ENCODE measurements at regions of chr18 and their contacts with region 1.

Region 1: GRCh38 chr18:51051105-51051712 is 21.2 kb downstream of the SMAD4 start:
- DNase-seq: no peak
- H3K4me3 ChIP-seq: no peak overlapping the region
- H3K27ac ChIP-seq: no peak overlapping the region
- H3K4me1 ChIP-seq: peaks cover 0 to 69% (median 18%) of the 10 kb centered on the region in 6 donors
- H3K27me3 ChIP-seq: no peaks in the 10 kb centered on the region
- CTCF ChIP-seq: peak; percentile 19 to 81 (median 67)
- POLR2A ChIP-seq: no peak

Region 2: GRCh38 chr18:50218432-50219197 is 832.6 kb before region 1 on chr18:
- intact Hi-C with region 1: no loop called
- DNase-seq: no peak
- H3K4me3 ChIP-seq: no peak overlapping the region
- H3K27ac ChIP-seq: no peak overlapping the region
- H3K4me1 ChIP-seq: no peaks in the 10 kb centered on the region
- H3K27me3 ChIP-seq: peaks cover 0 to 25% (median 0%) of the 10 kb centered on the region in 7 donors
- CTCF ChIP-seq: peak in 8 of 11 experiments; percentile 27 to 54 (median 40)
- POLR2A ChIP-seq: no peak

Region 3: GRCh38 chr18:50819728-50820378 is 231.4 kb before region 1 on chr18 and contains the start of gene MRO:
- intact Hi-C with region 1: loop called (anchors 5 kb)
- DNase-seq: peak; percentile 96
- H3K4me3 ChIP-seq: peak within 1 kb of the TSS; percentile 1 to 59 (median 22)
- H3K27ac ChIP-seq: peak within 1 kb of the TSS in 7 of 8 donors; percentile 63 to 81 (median 74)
- H3K4me1 ChIP-seq: peaks cover 20 to 71% (median 31%) of the 10 kb centered on the region in 6 donors
- H3K27me3 ChIP-seq: peaks cover 0 to 9% (median 0%) of the 10 kb centered on the region in 7 donors
- CTCF ChIP-seq: peak; percentile 75 to 97 (median 94)
- POLR2A ChIP-seq: peak in 1 of 3 donors; percentile 40
- total RNA-seq, gene MRO: 2.7 to 8.1 (median 5.4) TPM

Region 4: DNA sequence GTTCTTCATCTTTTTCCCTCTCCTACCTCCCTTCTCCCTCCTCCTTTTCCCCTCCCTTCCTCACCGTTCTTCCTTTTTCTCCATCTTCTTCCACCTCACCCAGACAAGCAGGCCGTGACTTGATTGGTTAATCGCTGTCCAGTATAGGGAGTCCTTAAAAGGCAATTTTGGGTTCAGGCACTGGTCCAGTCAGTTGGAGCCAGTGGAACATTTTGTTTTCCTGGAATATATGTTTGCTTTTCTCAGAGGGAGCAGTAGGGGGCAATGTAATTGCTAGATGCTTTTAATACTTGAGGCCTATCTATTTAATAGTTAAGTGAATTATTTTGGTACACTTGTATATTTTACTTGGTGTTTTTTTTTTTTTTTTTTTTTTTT is 68.4 kb before region 1 on chr18:
- intact Hi-C with region 1: no loop called
- DNase-seq: no peak
- H3K4me3 ChIP-seq: no peak overlapping the region
- H3K27ac ChIP-seq: no peak overlapping the region
- H3K4me1 ChIP-seq: no peaks in the 10 kb centered on the region
- H3K27me3 ChIP-seq: no peaks in the 10 kb centered on the region
- CTCF ChIP-seq: no peak
- POLR2A ChIP-seq: no peak

Region 5: GRCh38 chr18:51150132-51150715 is 99.0 kb after region 1 on chr18:
- intact Hi-C with region 1: no loop called
- DNase-seq: no peak
- H3K4me3 ChIP-seq: no peak overlapping the region
- H3K27ac ChIP-seq: no peak overlapping the region
- H3K4me1 ChIP-seq: peaks cover 11 to 36% (median 29%) of the 10 kb centered on the region in 6 donors
- H3K27me3 ChIP-seq: no peaks in the 10 kb centered on the region
- CTCF ChIP-seq: no peak
- POLR2A ChIP-seq: no peak

Measured in spleen (tissue), 13 donors.